ENCODE measurements at regions of chr17 and their contacts with region 1.

Region 1: GRCh38 chr17:3845621-3846441 is at the start of gene NCBP3:
- DNase-seq: peak; percentile 86 to 91 (median 86)
- H3K4me3 ChIP-seq: peak within 1 kb of the TSS; percentile 71
- H3K4me3 Mint-ChIP-seq: peak within 1 kb of the TSS; percentile 91 to 99 (median 94)
- H3K27ac ChIP-seq: peak within 1 kb of the TSS; percentile 79
- H3K27ac Mint-ChIP-seq: peak within 1 kb of the TSS; percentile 81 to 98 (median 92)
- H3K4me1 ChIP-seq: peaks cover 22% of the 10 kb centered on the region
- H3K4me1 Mint-ChIP-seq: peaks cover 15 to 42% (median 24%) of the 10 kb centered on the region in 3 donors
- H3K27me3 ChIP-seq: no peaks in the 10 kb centered on the region
- H3K27me3 Mint-ChIP-seq: peaks cover 0 to 4% of the 10 kb centered on the region in 2 donors
- total RNA-seq, gene NCBP3: 39.9 to 42.0 TPM

Region 2: GRCh38 chr17:3440451-3440850 is 405.4 kb before region 1 on chr17:
- CTCF ChIA-PET with region 1: no interaction called
- POLR2A ChIA-PET with region 1: no interaction called
- DNase-seq: no peak
- H3K4me3 ChIP-seq: no peak overlapping the region
- H3K4me3 Mint-ChIP-seq: no peak overlapping the region
- H3K27ac ChIP-seq: no peak overlapping the region
- H3K27ac Mint-ChIP-seq: no peak overlapping the region
- H3K4me1 ChIP-seq: no peaks in the 10 kb centered on the region
- H3K4me1 Mint-ChIP-seq: no peaks in the 10 kb centered on the region
- H3K27me3 ChIP-seq: no peaks in the 10 kb centered on the region
- H3K27me3 Mint-ChIP-seq: peaks cover 9 to 42% of the 10 kb centered on the region in 2 donors

Region 3: GRCh38 chr17:3610523-3610922 is 235.3 kb before region 1 on chr17:
- CTCF ChIA-PET with region 1: no interaction called
- POLR2A ChIA-PET with region 1: no interaction called
- DNase-seq: no peak
- H3K4me3 ChIP-seq: no peak overlapping the region
- H3K4me3 Mint-ChIP-seq: no peak overlapping the region
- H3K27ac ChIP-seq: no peak overlapping the region
- H3K27ac Mint-ChIP-seq: no peak overlapping the region
- H3K4me1 ChIP-seq: no peaks in the 10 kb centered on the region
- H3K4me1 Mint-ChIP-seq: no peaks in the 10 kb centered on the region
- H3K27me3 ChIP-seq: no peaks in the 10 kb centered on the region
- H3K27me3 Mint-ChIP-seq: no peaks in the 10 kb centered on the region

Region 4: DNA sequence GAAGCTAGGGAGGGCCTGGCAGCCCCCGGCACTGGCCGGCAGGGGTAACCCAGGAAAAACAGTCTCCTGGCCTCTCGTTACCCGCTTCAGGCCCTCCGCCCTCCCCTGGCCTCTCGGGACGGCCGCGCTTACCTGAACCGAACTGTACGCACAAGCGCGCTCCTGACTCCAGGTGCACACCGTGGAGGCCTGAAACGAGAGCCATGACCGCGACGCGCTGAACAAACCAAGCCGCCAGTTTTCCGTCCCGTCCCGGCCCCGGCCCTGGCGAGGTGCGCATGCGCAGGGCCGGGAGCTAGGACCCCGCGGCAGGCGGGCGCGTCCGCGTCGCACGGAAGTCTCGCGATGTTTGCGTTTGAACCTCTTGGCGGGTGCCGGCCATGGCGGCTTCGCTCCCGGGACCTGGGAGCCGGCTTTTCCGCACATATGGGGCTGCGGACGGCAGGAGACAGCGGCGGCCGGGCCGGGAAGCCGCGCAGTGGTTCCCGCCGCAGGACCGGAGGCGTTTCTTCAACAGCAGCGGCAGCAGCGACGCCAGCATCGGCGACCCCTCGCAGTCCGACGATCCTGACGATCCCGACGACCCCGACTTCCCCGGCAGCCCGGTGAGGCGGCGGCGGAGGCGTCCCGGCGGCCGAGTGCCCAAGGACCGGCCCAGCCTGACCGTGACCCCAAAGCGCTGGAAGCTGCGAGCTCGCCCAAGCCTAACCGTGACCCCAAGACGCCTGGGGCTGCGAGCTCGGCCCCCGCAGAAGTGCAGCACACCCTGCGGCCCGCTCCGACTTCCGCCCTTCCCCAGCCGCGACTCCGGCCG is 122.1 kb before region 1 on chr17 and contains the start of gene HASPIN:
- CTCF ChIA-PET with region 1: interaction called, 17 read pairs
- POLR2A ChIA-PET with region 1: no interaction called
- DNase-seq: peak; percentile 88 to 94 (median 90)
- H3K4me3 ChIP-seq: peak within 1 kb of the TSS; percentile 68
- H3K4me3 Mint-ChIP-seq: peak within 1 kb of the TSS; percentile 92 to 98 (median 94)
- H3K27ac ChIP-seq: peak within 1 kb of the TSS; percentile 29
- H3K27ac Mint-ChIP-seq: peak within 1 kb of the TSS; percentile 48 to 96 (median 92)
- H3K4me1 ChIP-seq: peaks cover 18% of the 10 kb centered on the region
- H3K4me1 Mint-ChIP-seq: peaks cover 24 to 49% (median 39%) of the 10 kb centered on the region in 3 donors
- H3K27me3 ChIP-seq: no peaks in the 10 kb centered on the region
- H3K27me3 Mint-ChIP-seq: no peaks in the 10 kb centered on the region
- total RNA-seq, gene HASPIN: 16.0 to 16.6 TPM

Region 5: DNA sequence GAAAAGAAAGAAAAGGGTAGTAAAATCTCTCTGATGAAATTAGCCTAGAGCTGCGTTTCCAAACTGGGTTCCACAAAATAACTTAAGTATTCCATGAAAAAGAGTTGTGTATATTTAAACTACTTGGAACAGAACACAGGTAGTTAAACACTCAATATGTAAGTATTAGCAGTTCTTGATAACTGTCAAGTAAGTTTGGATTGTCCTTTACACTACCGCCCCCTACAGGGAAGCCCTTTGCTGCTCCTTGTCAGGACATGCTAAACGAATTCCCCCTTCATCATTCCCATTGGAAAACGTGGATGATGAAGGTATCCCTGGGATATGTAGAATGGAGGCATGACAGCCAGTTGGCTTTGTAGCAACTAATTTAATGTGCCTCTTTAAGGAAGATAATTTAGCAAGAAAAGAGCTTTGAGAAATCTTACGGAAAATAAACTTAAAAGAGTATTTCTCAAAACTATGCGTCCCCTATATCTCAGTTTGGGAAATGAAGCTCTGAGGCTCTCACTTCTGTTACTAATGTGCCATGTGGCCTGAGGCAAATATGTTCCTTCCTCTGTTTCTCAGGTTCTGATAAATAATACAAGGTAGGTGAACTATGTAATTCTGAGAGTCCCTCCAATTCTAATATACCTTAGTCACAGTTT is 18.6 kb before region 1 on chr17:
- CTCF ChIA-PET with region 1: interaction called, 14 read pairs
- POLR2A ChIA-PET with region 1: interaction called, 4 read pairs
- DNase-seq: peak; percentile 60 to 82 (median 69)
- H3K4me3 ChIP-seq: no peak overlapping the region
- H3K4me3 Mint-ChIP-seq: no peak overlapping the region
- H3K27ac ChIP-seq: no peak overlapping the region
- H3K27ac Mint-ChIP-seq: peak overlapping the region in 3 of 8 donors; percentile 6 to 89 (median 35)
- H3K4me1 ChIP-seq: no peaks in the 10 kb centered on the region
- H3K4me1 Mint-ChIP-seq: peaks cover 0 to 8% (median 5%) of the 10 kb centered on the region in 3 donors
- H3K27me3 ChIP-seq: no peaks in the 10 kb centered on the region
- H3K27me3 Mint-ChIP-seq: no peaks in the 10 kb centered on the region

Region 6: DNA sequence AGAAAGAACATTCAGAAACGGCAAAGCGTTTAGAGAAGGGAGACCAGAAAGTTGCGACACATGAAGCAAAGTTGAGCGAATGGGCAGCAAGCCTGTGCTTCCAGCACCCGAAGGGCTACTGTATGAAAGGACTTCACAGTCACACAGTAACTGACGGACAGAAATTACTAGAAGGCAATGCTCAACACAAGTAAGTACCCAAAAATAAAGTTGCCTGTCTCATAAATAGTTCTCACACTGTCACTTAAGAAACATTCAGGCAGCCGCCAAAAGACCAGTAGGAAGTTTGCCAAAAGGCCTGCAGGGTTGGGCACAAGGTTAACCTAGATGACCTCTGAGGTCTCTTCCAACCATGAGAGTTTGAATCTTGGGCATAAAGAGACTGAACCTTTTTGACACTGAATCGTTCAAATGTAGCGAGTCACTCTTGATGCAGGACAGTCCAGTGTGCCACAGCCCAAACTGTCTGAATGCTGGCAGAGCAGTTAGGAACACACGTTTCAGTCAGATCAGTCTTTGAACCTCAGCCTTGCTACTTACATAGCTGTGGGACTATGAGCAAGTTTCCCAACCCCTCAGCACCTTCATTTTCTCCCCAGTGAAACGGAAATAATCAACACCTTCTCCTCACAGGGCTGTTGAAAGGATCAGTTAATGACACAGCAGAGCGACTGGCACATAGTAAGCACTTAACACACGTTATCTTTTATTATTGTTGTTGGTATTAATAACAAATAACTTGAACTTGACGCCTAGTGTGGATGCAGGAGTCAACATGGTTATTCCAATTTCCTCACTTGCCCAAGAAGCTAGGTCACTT is 10.2 kb before region 1 on chr17:
- CTCF ChIA-PET with region 1: interaction called, 16 read pairs
- POLR2A ChIA-PET with region 1: interaction called, 3 read pairs
- DNase-seq: no peak
- H3K4me3 ChIP-seq: no peak overlapping the region
- H3K4me3 Mint-ChIP-seq: no peak overlapping the region
- H3K27ac ChIP-seq: no peak overlapping the region
- H3K27ac Mint-ChIP-seq: peak overlapping the region in 2 of 8 donors; percentile 14 to 20
- H3K4me1 ChIP-seq: no peaks in the 10 kb centered on the region
- H3K4me1 Mint-ChIP-seq: peaks cover 11 to 37% (median 30%) of the 10 kb centered on the region in 3 donors
- H3K27me3 ChIP-seq: no peaks in the 10 kb centered on the region
- H3K27me3 Mint-ChIP-seq: no peaks in the 10 kb centered on the region

Region 7: DNA sequence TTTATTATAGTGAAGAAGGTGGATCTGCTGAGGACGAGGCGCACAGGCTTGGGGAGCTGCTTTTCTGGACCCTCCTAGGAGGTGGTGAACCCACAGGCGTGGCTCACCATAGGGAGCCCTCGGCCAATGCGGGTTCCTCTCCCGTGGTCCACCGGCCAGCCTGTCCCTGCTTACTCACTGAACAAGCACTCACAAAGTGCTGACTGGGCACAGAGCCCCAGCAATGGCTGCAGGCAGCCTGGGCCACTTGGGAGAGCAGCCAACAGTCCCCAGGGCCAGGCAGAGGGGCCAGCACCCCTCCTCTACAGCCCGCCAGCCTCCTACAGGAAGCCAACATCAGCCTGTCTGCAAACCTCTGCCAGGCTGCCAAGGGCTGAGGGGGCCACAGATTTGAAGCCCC is 19.3 kb after region 1 on chr17:
- CTCF ChIA-PET with region 1: interaction called, 14 read pairs
- POLR2A ChIA-PET with region 1: no interaction called
- DNase-seq: no peak
- H3K4me3 ChIP-seq: no peak overlapping the region
- H3K4me3 Mint-ChIP-seq: no peak overlapping the region
- H3K27ac ChIP-seq: no peak overlapping the region
- H3K27ac Mint-ChIP-seq: no peak overlapping the region
- H3K4me1 ChIP-seq: no peaks in the 10 kb centered on the region
- H3K4me1 Mint-ChIP-seq: no peaks in the 10 kb centered on the region
- H3K27me3 ChIP-seq: no peaks in the 10 kb centered on the region
- H3K27me3 Mint-ChIP-seq: no peaks in the 10 kb centered on the region

Measured in CD8-positive, alpha-beta memory T cell (primary cell).